Heart left ventricle (tissue), 16 donors: ENCODE measurements at regions of chr9 and their contacts with region 1.

Region 1: GRCh38 chr9:34603610-34604231 is 8.2 kb downstream of the RPP25L start:
- DNase-seq: peak; percentile 70 to 84 (median 78)
- ATAC-seq: peak; percentile 80 to 88 (median 86)
- H3K4me3 ChIP-seq: no peak overlapping the region
- H3K27ac ChIP-seq: no peak overlapping the region
- H3K4me1 ChIP-seq: peaks cover 0 to 5% (median 0%) of the 10 kb centered on the region in 12 donors
- H3K27me3 ChIP-seq: no peaks in the 10 kb centered on the region
- CTCF ChIP-seq: peak; percentile 83 to 95 (median 92)
- POLR2A ChIP-seq: no peak

Region 2: GRCh38 chr9:34328987-34329832 is 274.5 kb before region 1 on chr9 and contains the starts of genes KIF24 and NUDT2:
- intact Hi-C with region 1: loop called in 6 of 10 experiments (anchors 5 to 10 kb)
- DNase-seq: peak; percentile 96 to 99 (median 98)
- ATAC-seq: peak; percentile 97 to 98 (median 98)
- H3K4me3 ChIP-seq: peak within 1 kb of the TSS; percentile 47 to 88 (median 80)
- H3K27ac ChIP-seq: peak within 1 kb of the TSS; percentile 88 to 96 (median 91)
- H3K4me1 ChIP-seq: peaks cover 0 to 35% (median 14%) of the 10 kb centered on the region in 12 donors
- H3K27me3 ChIP-seq: no peaks in the 10 kb centered on the region
- CTCF ChIP-seq: peak in 4 of 12 donors; percentile 7 to 33 (median 10)
- POLR2A ChIP-seq: peak in 1 of 2 donors; percentile 88
- total RNA-seq, gene KIF24: 0.25 to 1.6 (median 0.67) TPM
- total RNA-seq, gene NUDT2: 14.1 to 21.3 (median 17.2) TPM

Region 3: DNA sequence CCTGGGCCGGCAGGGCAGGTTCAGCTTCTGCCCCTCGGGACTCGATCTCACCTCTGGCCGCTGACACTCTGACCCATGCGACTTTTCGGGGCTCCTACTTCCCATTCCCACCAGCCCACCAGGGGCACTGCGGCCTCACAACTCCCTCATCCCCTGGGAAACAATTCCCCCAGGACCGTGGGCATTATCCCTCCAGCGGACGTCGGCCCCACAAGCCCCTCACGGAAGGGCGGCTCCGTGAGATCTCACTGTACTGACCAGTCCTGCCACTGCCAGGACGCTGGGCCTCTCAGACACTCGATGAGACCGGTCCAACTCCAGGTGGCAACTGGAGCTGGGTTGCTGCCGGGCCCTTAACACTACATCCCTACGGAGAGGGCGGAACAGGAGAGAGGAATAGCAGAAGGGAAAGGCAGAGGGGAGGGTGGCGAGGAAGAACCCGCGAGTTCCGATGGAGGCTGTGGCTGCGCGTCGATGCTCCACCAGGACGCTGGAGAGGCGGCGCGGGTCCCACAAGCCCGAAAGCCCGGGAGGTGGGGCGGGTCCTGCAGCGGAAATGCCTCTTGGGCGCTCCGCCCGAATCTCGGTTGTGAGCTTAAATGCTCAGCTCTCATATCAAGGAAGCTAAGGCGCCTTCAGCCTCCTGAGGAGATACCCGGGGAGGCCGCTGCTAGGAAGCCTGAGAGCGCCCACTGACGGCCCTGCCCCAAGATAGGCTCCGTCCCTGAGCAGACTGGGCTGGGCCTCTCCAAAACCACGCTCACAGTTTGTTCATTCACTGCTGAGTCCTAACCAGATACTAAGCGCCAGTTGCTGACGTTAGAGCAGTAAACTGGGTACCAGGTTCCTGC is 432.4 kb after region 1 on chr9:
- intact Hi-C with region 1: no loop called
- DNase-seq: peak; percentile 59 to 85 (median 70)
- ATAC-seq: peak in 3 of 4 donors; percentile 76 to 81 (median 78)
- H3K4me3 ChIP-seq: peak overlapping the region in 11 of 12 donors; percentile 1 to 53 (median 43)
- H3K27ac ChIP-seq: peak overlapping the region in 5 of 12 donors; percentile 1 to 33 (median 28)
- H3K4me1 ChIP-seq: peaks cover 0 to 10% (median 3%) of the 10 kb centered on the region in 12 donors
- H3K27me3 ChIP-seq: no peaks in the 10 kb centered on the region
- CTCF ChIP-seq: no peak
- POLR2A ChIP-seq: no peak